Natural killer cell (primary cell): ENCODE measurements at regions of chr2 and their contacts with region 1.

Region 1: DNA sequence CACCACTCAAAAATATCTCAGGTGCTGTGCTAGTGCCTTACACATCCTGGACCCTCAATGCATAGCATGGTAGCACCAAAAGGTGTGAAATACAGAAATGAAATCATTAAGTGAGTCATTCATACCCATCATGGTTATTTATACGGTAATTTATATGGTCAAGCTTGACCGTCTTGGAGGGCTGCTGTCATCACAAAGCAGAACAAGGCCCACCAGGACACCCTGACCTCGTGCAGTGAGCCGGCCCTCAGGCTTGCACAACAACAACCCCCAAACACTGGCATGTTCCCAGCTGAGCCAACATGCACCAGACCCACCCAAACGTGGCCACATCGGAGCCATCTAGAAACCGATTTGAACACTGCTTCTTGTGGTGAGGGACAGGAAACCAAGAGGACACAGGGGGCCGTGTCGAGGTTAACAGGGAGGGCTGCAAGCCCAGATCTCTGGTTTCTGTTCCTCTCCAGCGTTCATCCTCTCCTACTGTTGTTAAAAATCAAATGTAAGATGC is 378.5 kb upstream of the ID2 start:
- DNase-seq: peak; percentile 77 to 82
- ATAC-seq: peak; percentile 55 to 82 (median 79)
- H3K4me3 ChIP-seq: no peak overlapping the region
- H3K4me3 Mint-ChIP-seq: peak overlapping the region; percentile 83
- H3K27ac ChIP-seq: peak overlapping the region; percentile 77
- H3K27ac Mint-ChIP-seq: peak overlapping the region; percentile 91 to 99
- H3K4me1 ChIP-seq: peaks cover 91% of the 10 kb centered on the region
- H3K4me1 Mint-ChIP-seq: peaks cover 93 to 94% of the 10 kb centered on the region in 2 donors
- H3K27me3 ChIP-seq: no peaks in the 10 kb centered on the region
- H3K27me3 Mint-ChIP-seq: no peaks in the 10 kb centered on the region
- CTCF ChIP-seq: no peak

Region 2: GRCh38 chr2:8281950-8282857 is 21.2 kb before region 1 on chr2:
- intact Hi-C with region 1: loop called (anchors 1 kb)
- DNase-seq: peak; percentile 51 to 53
- ATAC-seq: peak; percentile 79 to 88 (median 82)
- H3K4me3 ChIP-seq: peak overlapping the region; percentile 60
- H3K4me3 Mint-ChIP-seq: peak overlapping the region; percentile 99
- H3K27ac ChIP-seq: peak overlapping the region; percentile 71
- H3K27ac Mint-ChIP-seq: peak overlapping the region; percentile 98 to 99
- H3K4me1 ChIP-seq: peaks cover 53% of the 10 kb centered on the region
- H3K4me1 Mint-ChIP-seq: peaks cover 67 to 84% of the 10 kb centered on the region in 2 donors
- H3K27me3 ChIP-seq: no peaks in the 10 kb centered on the region
- H3K27me3 Mint-ChIP-seq: no peaks in the 10 kb centered on the region
- CTCF ChIP-seq: no peak

Region 3: GRCh38 chr2:8344144-8345097 is 41.0 kb after region 1 on chr2:
- intact Hi-C with region 1: loop called (anchors 1 kb)
- DNase-seq: no peak
- ATAC-seq: no peak
- H3K4me3 ChIP-seq: no peak overlapping the region
- H3K4me3 Mint-ChIP-seq: no peak overlapping the region
- H3K27ac ChIP-seq: peak overlapping the region; percentile 87
- H3K27ac Mint-ChIP-seq: peak overlapping the region; percentile 94 to 97
- H3K4me1 ChIP-seq: peaks cover 36% of the 10 kb centered on the region
- H3K4me1 Mint-ChIP-seq: peaks cover 48 to 78% of the 10 kb centered on the region in 2 donors
- H3K27me3 ChIP-seq: no peaks in the 10 kb centered on the region
- H3K27me3 Mint-ChIP-seq: no peaks in the 10 kb centered on the region
- CTCF ChIP-seq: no peak

Region 4: GRCh38 chr2:8456151-8456845 is 152.9 kb after region 1 on chr2:
- intact Hi-C with region 1: loop called (anchors 10 kb)
- DNase-seq: peak; percentile 44 to 80
- ATAC-seq: peak; percentile 46 to 64 (median 51)
- H3K4me3 ChIP-seq: peak overlapping the region; percentile 19
- H3K4me3 Mint-ChIP-seq: peak overlapping the region; percentile 95
- H3K27ac ChIP-seq: peak overlapping the region; percentile 99
- H3K27ac Mint-ChIP-seq: peak overlapping the region; percentile 99 to 100
- H3K4me1 ChIP-seq: peaks cover 80% of the 10 kb centered on the region
- H3K4me1 Mint-ChIP-seq: peaks cover 80 to 85% of the 10 kb centered on the region in 2 donors
- H3K27me3 ChIP-seq: no peaks in the 10 kb centered on the region
- H3K27me3 Mint-ChIP-seq: no peaks in the 10 kb centered on the region
- CTCF ChIP-seq: no peak

Region 5: GRCh38 chr2:8514796-8515758 is 211.7 kb after region 1 on chr2:
- intact Hi-C with region 1: loop called (anchors 2 kb)
- DNase-seq: peak; percentile 46 to 85
- ATAC-seq: peak; percentile 43 to 76 (median 63)
- H3K4me3 ChIP-seq: no peak overlapping the region
- H3K4me3 Mint-ChIP-seq: peak overlapping the region; percentile 68
- H3K27ac ChIP-seq: peak overlapping the region; percentile 92
- H3K27ac Mint-ChIP-seq: peak overlapping the region; percentile 88 to 94
- H3K4me1 ChIP-seq: peaks cover 99% of the 10 kb centered on the region
- H3K4me1 Mint-ChIP-seq: peaks cover 71 to 84% of the 10 kb centered on the region in 2 donors
- H3K27me3 ChIP-seq: no peaks in the 10 kb centered on the region
- H3K27me3 Mint-ChIP-seq: no peaks in the 10 kb centered on the region
- CTCF ChIP-seq: no peak

Region 6: GRCh38 chr2:8681786-8682692 is 378.7 kb after region 1 on chr2 and contains the start of gene ID2:
- intact Hi-C with region 1: loop called (anchors 2 kb)
- DNase-seq: peak; percentile 99 to 100
- ATAC-seq: peak; percentile 75 to 88 (median 77)
- H3K4me3 ChIP-seq: peak within 1 kb of the TSS; percentile 80
- H3K4me3 Mint-ChIP-seq: peak within 1 kb of the TSS; percentile 99
- H3K27ac ChIP-seq: peak within 1 kb of the TSS; percentile 48
- H3K27ac Mint-ChIP-seq: peak within 1 kb of the TSS; percentile 97 to 98
- H3K4me1 ChIP-seq: peaks cover 37% of the 10 kb centered on the region
- H3K4me1 Mint-ChIP-seq: peaks cover 59 to 69% of the 10 kb centered on the region in 2 donors
- H3K27me3 ChIP-seq: peaks cover 6% of the 10 kb centered on the region
- H3K27me3 Mint-ChIP-seq: peaks cover 0 to 8% of the 10 kb centered on the region in 2 donors
- CTCF ChIP-seq: no peak
- total RNA-seq, gene ID2: 185 to 209 (median 191) TPM

Region 7: DNA sequence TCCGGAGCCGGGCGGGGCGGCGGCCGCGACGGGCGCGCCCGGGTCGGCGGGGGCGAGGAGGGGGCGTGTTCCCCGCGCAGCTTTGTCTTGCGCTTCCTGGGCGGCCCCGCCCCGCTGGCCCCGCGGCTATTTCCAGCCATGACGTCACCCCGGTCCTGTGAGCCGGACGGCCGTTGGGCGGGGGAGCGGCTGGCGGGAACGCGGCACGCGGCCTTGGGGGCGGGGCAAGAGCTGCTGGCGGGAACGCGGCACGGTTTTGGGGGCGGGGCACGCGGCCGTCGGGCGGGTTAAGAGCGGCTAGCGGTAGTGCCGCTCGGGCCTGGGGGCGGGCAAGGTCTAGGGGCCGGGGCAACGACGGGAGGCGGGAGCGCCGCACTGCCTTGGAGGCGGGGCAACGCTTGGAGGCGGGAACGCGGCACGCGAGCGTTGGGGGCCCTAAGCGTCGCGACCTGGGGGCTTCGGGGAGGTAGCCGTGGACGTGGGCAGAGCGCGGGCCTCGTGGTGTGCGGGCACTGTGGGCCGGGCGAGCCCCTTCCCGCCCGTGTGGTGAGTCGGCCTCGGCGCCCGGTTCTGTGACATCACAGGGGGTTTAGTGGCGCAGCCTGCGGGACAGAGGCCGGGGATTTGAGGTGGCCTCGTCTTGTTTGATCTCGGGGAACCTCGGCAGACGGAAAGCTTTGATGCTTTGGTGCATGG is 1740.7 kb after region 1 on chr2:
- intact Hi-C with region 1: no loop called
- DNase-seq: peak; percentile 90 to 95
- ATAC-seq: peak; percentile 62 to 79 (median 63)
- H3K4me3 ChIP-seq: peak overlapping the region; percentile 43
- H3K4me3 Mint-ChIP-seq: peak overlapping the region; percentile 82
- H3K27ac ChIP-seq: peak overlapping the region; percentile 75
- H3K27ac Mint-ChIP-seq: peak overlapping the region; percentile 95 to 96
- H3K4me1 ChIP-seq: peaks cover 30% of the 10 kb centered on the region
- H3K4me1 Mint-ChIP-seq: peaks cover 14 to 46% of the 10 kb centered on the region in 2 donors
- H3K27me3 ChIP-seq: no peaks in the 10 kb centered on the region
- H3K27me3 Mint-ChIP-seq: no peaks in the 10 kb centered on the region
- CTCF ChIP-seq: no peak